Naive thymus-derived CD4-positive, alpha-beta T cell (primary cell): ENCODE measurements at regions of chr11 and their contacts with region 1.

Region 1: DNA sequence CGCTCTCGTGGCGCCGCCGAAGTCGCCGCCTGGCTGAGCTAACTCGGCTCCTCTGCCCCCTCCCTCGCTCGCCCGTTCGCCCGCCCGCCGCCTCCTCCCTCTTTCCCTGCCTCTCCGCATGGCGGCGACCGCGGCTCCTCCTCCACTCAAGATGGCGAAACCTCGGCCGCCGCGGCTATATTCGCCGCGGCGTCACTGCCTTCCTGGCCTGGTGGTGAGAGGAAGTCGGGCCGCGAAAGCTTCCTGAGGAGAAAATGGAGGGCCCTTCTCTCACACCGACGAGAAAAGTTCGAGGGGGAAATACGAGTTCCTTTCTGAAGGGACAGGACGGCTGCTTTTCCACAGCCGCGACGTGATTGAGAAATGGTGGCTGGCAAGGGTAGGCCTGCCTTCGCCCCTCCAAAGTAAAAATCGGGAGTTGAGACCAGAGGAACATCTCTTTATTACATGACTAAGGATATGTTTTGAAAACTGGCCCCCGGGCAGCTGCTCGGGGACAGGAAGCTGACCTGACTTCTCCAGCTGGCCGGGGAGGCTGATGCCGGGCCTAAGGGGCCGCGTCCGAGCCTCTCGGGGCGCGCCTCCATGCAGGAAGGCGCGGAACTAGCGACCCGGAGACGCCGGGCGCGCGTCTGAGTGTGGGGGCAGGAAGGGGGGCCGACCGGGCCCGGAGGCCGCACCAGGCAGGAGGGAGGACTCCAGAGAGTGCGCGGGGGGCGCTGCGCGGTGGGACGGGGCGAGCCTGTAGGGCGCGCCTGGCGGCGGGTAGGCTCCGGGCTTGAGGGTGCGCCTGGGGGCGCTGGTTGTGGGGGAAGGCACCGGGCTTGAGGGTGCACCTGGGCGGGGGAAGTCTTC is at the start of gene DDX6:
- DNase-seq: peak; percentile 84 to 92 (median 89)
- ATAC-seq: peak; percentile 79
- H3K4me3 ChIP-seq: peak within 1 kb of the TSS; percentile 78
- H3K4me3 Mint-ChIP-seq: peak within 1 kb of the TSS; percentile 92 to 100 (median 98)
- H3K27ac ChIP-seq: peak within 1 kb of the TSS; percentile 99
- H3K27ac Mint-ChIP-seq: peak within 1 kb of the TSS; percentile 95 to 100 (median 99)
- H3K4me1 ChIP-seq: peaks cover 15 to 24% of the 10 kb centered on the region in 2 donors
- H3K4me1 Mint-ChIP-seq: peaks cover 20 to 38% (median 28%) of the 10 kb centered on the region in 7 donors
- H3K27me3 ChIP-seq: no peaks in the 10 kb centered on the region
- H3K27me3 Mint-ChIP-seq: no peaks in the 10 kb centered on the region
- total RNA-seq, gene DDX6: 154 to 346 (median 272) TPM

Region 2: DNA sequence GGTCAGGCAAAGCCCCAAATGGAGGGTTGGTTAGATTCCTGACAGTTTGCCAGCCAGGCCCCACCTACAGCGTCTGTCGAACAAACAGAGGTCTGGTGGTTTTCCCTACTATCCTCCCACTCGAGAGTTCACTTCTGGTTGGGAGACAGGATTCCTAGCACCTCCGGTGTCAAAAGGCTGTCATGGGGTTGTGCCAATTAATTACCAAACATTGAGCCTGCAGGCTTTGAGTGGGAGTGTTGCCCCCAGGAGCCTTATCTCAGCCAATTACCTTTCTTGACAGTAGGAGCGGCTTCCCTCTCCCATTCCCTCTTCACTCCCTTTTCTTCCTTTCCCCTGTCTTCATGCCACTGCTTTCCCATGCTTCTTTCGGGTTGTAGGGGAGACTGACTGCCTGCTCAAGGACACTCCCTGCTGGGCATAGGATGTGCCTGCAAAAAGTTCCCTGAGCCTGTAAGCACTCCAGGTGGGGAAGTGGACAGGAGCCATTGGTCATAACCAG is 268.7 kb before region 1 on chr11:
- CTCF ChIA-PET with region 1: no interaction called
- POLR2A ChIA-PET with region 1: no interaction called
- intact Hi-C with region 1: no loop called
- DNase-seq: no peak
- ATAC-seq: no peak
- H3K4me3 ChIP-seq: no peak overlapping the region
- H3K4me3 Mint-ChIP-seq: no peak overlapping the region
- H3K27ac ChIP-seq: no peak overlapping the region
- H3K27ac Mint-ChIP-seq: peak overlapping the region in 6 of 9 donors; percentile 4 to 81 (median 34)
- H3K4me1 ChIP-seq: no peaks in the 10 kb centered on the region
- H3K4me1 Mint-ChIP-seq: peaks cover 11 to 27% (median 22%) of the 10 kb centered on the region in 7 donors
- H3K27me3 ChIP-seq: no peaks in the 10 kb centered on the region
- H3K27me3 Mint-ChIP-seq: no peaks in the 10 kb centered on the region

Region 3: DNA sequence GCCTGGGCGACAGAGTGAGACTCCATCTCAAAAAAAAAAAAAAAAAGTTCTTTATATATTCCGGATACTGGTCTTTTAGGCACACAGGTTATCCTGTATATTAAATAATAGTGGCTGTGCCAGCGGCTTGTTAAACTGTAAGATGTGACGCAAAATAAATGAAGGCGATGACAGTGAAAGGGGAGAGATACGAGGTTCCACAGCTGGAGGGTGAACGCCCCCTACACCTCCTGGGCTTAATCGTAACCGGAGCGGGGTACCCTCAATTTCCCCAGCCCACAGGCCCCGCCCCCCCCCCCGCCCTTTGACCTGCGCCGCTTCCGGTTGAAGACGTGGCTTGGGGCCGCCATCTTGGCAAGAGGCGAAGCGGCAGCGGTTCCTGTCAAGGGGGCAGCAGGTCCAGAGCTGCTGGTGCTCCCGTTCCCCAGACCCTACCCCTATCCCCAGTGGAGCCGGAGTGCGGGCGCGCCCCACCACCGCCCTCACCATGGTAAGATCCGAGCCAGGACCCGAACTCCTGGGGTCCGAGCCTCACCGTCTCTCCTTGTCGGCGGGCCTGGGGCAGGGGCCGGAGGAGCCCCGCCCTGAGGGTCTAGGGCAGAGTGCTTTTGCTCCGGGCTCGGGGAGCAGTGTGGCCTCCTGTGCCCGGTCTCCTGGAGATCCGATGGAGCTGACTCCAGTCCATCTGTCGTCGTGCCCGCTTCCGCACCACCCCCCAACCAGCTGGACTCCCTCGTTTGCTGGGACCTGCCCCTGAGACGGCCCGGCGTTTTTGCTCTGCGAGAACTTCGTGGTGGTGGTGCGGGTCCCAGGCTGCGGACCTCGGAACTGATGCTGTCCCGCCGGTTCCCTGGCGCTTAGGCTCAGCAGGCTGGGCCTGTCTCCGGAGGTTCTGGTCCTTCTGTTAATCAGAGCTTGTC is 219.0 kb before region 1 on chr11 and contains the start of gene ARCN1:
- CTCF ChIA-PET with region 1: no interaction called
- POLR2A ChIA-PET with region 1: interaction called, 3 read pairs
- intact Hi-C with region 1: loop called in 1 of 2 experiments (anchors 2 kb)
- DNase-seq: peak; percentile 58 to 82 (median 79)
- ATAC-seq: peak; percentile 94
- H3K4me3 ChIP-seq: peak within 1 kb of the TSS; percentile 98
- H3K4me3 Mint-ChIP-seq: peak within 1 kb of the TSS; percentile 83 to 99 (median 96)
- H3K27ac ChIP-seq: peak within 1 kb of the TSS; percentile 100
- H3K27ac Mint-ChIP-seq: peak within 1 kb of the TSS; percentile 92 to 98 (median 98)
- H3K4me1 ChIP-seq: peaks cover 26 to 36% of the 10 kb centered on the region in 2 donors
- H3K4me1 Mint-ChIP-seq: peaks cover 35 to 58% (median 50%) of the 10 kb centered on the region in 7 donors
- H3K27me3 ChIP-seq: no peaks in the 10 kb centered on the region
- H3K27me3 Mint-ChIP-seq: no peaks in the 10 kb centered on the region
- total RNA-seq, gene ARCN1: 71.2 to 134 (median 115) TPM

Region 4: GRCh38 chr11:118699506-118700220 is 91.7 kb before region 1 on chr11:
- CTCF ChIA-PET with region 1: interaction called, 10 read pairs
- POLR2A ChIA-PET with region 1: interaction called, 82 read pairs
- intact Hi-C with region 1: loop called in 1 of 2 experiments (anchors 2 kb)
- DNase-seq: peak in 7 of 9 donors; percentile 78 to 92 (median 88)
- ATAC-seq: peak; percentile 96
- H3K4me3 ChIP-seq: peak overlapping the region; percentile 20
- H3K4me3 Mint-ChIP-seq: peak overlapping the region; percentile 33 to 85 (median 80)
- H3K27ac ChIP-seq: peak overlapping the region; percentile 66
- H3K27ac Mint-ChIP-seq: peak overlapping the region; percentile 79 to 99 (median 98)
- H3K4me1 ChIP-seq: peaks cover 44 to 66% of the 10 kb centered on the region in 2 donors
- H3K4me1 Mint-ChIP-seq: peaks cover 14 to 83% (median 56%) of the 10 kb centered on the region in 7 donors
- H3K27me3 ChIP-seq: no peaks in the 10 kb centered on the region
- H3K27me3 Mint-ChIP-seq: no peaks in the 10 kb centered on the region

Region 5: GRCh38 chr11:118820412-118821357 is 29.3 kb after region 1 on chr11:
- CTCF ChIA-PET with region 1: interaction called, 6 read pairs
- POLR2A ChIA-PET with region 1: interaction called, 11 read pairs
- intact Hi-C with region 1: no loop called
- DNase-seq: no peak
- ATAC-seq: peak; percentile 55
- H3K4me3 ChIP-seq: no peak overlapping the region
- H3K4me3 Mint-ChIP-seq: peak overlapping the region in 2 of 10 donors; percentile 9 to 13
- H3K27ac ChIP-seq: no peak overlapping the region
- H3K27ac Mint-ChIP-seq: peak overlapping the region in 1 of 9 donors; percentile 25
- H3K4me1 ChIP-seq: no peaks in the 10 kb centered on the region
- H3K4me1 Mint-ChIP-seq: peaks cover 0 to 4% (median 0%) of the 10 kb centered on the region in 7 donors
- H3K27me3 ChIP-seq: no peaks in the 10 kb centered on the region
- H3K27me3 Mint-ChIP-seq: no peaks in the 10 kb centered on the region

Region 6: DNA sequence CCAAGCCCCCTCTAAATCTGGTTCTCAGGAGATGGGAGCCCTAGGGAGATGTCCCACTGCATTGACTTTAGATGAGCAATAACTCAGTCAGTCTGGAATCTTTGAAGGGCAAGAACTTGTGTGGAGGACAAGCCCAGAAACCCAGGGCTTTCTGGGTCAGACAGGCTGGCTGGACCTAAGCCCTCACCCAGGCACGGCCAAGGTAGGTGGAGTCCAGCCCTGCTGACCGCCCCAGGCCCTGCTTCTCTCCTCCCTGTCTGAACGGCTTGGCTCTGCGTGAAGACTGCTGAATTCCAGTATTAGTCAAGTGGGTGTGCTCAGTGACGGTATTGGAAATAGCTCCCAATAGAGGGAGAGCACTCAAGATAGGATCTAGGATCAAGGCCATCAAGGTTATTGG is 98.4 kb after region 1 on chr11:
- CTCF ChIA-PET with region 1: interaction called, 68 read pairs
- POLR2A ChIA-PET with region 1: no interaction called
- intact Hi-C with region 1: loop called (anchors 1 kb)
- DNase-seq: no peak
- ATAC-seq: no peak
- H3K4me3 ChIP-seq: no peak overlapping the region
- H3K4me3 Mint-ChIP-seq: peak overlapping the region in 5 of 10 donors; percentile 8 to 82 (median 59)
- H3K27ac ChIP-seq: no peak overlapping the region
- H3K27ac Mint-ChIP-seq: peak overlapping the region in 6 of 9 donors; percentile 52 to 98 (median 96)
- H3K4me1 ChIP-seq: peaks cover 58 to 71% of the 10 kb centered on the region in 2 donors
- H3K4me1 Mint-ChIP-seq: peaks cover 53 to 92% (median 83%) of the 10 kb centered on the region in 7 donors
- H3K27me3 ChIP-seq: no peaks in the 10 kb centered on the region
- H3K27me3 Mint-ChIP-seq: no peaks in the 10 kb centered on the region

Region 7: DNA sequence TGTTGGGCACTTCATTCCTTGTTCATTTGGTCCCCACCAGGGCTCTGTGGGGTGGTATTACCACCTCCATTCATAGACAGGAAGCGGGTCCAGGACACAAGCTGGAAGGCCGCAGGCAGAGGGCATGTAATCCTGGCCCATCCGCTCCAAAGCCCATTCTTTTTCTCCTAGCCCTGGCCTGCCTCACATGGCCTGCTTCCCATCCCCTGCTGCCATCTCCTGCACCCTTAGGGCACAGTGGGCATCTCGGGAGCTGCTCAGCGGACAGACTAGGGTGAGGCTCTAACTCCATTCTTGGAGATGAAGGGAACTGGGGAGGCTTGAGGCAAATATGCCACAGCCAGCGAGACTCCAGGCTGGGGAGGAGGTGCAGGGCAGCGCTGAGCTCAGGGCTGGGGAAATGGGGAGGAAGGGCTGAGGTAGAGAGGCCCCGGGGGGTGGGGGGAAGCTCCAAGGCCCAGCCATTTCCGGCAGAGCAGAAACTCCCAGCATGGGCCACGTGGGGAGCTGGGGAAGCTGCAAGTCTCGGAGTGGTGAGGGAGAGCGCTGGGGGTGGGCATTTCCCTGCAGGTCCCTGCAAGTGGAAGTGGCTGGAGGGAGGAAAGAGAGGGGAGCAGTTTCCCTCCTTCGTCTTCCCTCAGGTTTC is 148.7 kb after region 1 on chr11:
- CTCF ChIA-PET with region 1: no interaction called
- POLR2A ChIA-PET with region 1: interaction called, 15 read pairs
- intact Hi-C with region 1: no loop called
- DNase-seq: peak in 6 of 9 donors; percentile 53 to 70 (median 58)
- ATAC-seq: peak; percentile 86
- H3K4me3 ChIP-seq: peak overlapping the region; percentile 38
- H3K4me3 Mint-ChIP-seq: peak overlapping the region in 9 of 10 donors; percentile 33 to 74 (median 66)
- H3K27ac ChIP-seq: peak overlapping the region; percentile 34
- H3K27ac Mint-ChIP-seq: peak overlapping the region in 8 of 9 donors; percentile 56 to 82 (median 76)
- H3K4me1 ChIP-seq: peaks cover 12 to 24% of the 10 kb centered on the region in 2 donors
- H3K4me1 Mint-ChIP-seq: peaks cover 31 to 60% (median 54%) of the 10 kb centered on the region in 7 donors
- H3K27me3 ChIP-seq: no peaks in the 10 kb centered on the region
- H3K27me3 Mint-ChIP-seq: peaks cover 0 to 4% (median 0%) of the 10 kb centered on the region in 5 donors

Region 8: GRCh38 chr11:119095066-119095880 is 303.9 kb after region 1 on chr11:
- CTCF ChIA-PET with region 1: no interaction called
- POLR2A ChIA-PET with region 1: no interaction called
- intact Hi-C with region 1: loop called (anchors 1 to 5 kb)
- DNase-seq: peak; percentile 96 to 100 (median 100)
- ATAC-seq: peak; percentile 93
- H3K4me3 ChIP-seq: peak overlapping the region; percentile 94
- H3K4me3 Mint-ChIP-seq: peak overlapping the region; percentile 90 to 97 (median 93)
- H3K27ac ChIP-seq: peak overlapping the region; percentile 75
- H3K27ac Mint-ChIP-seq: peak overlapping the region; percentile 82 to 96 (median 88)
- H3K4me1 ChIP-seq: peaks cover 11 to 23% of the 10 kb centered on the region in 2 donors
- H3K4me1 Mint-ChIP-seq: peaks cover 20 to 67% (median 37%) of the 10 kb centered on the region in 7 donors
- H3K27me3 ChIP-seq: no peaks in the 10 kb centered on the region
- H3K27me3 Mint-ChIP-seq: peaks cover 0 to 3% (median 0%) of the 10 kb centered on the region in 5 donors

Region 9: GRCh38 chr11:119403021-119403420 is 611.7 kb after region 1 on chr11:
- CTCF ChIA-PET with region 1: no interaction called
- POLR2A ChIA-PET with region 1: no interaction called
- intact Hi-C with region 1: no loop called
- DNase-seq: no peak
- ATAC-seq: no peak
- H3K4me3 ChIP-seq: no peak overlapping the region
- H3K4me3 Mint-ChIP-seq: no peak overlapping the region
- H3K27ac ChIP-seq: no peak overlapping the region
- H3K27ac Mint-ChIP-seq: no peak overlapping the region
- H3K4me1 ChIP-seq: no peaks in the 10 kb centered on the region
- H3K4me1 Mint-ChIP-seq: no peaks in the 10 kb centered on the region
- H3K27me3 ChIP-seq: no peaks in the 10 kb centered on the region
- H3K27me3 Mint-ChIP-seq: peaks cover 10 to 25% (median 17%) of the 10 kb centered on the region in 5 donors